Activated naive CD4-positive, alpha-beta T cell treated with anti-CD3 and anti-CD28 coated beads for 36 hours (primary cell): ENCODE measurements at regions of chr12 and their contacts with region 1.

Region 1: GRCh38 chr12:22409377-22410164 is 75.1 kb upstream of the ST8SIA1 start:
- DNase-seq: peak; percentile 51
- H3K4me3 Mint-ChIP-seq: no peak overlapping the region
- H3K27ac Mint-ChIP-seq: no peak overlapping the region
- H3K4me1 Mint-ChIP-seq: peaks cover 15% of the 10 kb centered on the region
- H3K27me3 Mint-ChIP-seq: no peaks in the 10 kb centered on the region

Region 2: DNA sequence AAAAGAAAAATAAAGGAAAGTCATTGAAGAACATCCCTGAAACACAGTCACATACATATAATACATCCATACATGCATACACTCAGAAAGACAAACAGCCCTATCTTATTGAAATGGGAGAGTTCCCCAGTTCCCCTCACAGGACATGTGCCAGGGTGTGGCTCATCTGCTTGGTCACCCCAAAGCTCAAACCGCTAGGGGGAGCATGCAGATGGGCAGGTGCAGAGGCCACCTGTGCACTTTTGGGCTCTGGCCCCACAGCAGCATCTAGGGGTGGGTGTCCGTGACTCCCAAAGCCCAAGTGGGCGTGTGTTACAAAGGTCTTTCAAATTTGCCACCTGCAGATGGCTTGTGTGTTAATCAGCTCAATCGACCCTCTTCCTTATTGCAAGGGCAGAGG is 288.3 kb before region 1 on chr12:
- CTCF ChIA-PET with region 1: no interaction called
- intact Hi-C with region 1: no loop called
- DNase-seq: peak; percentile 51
- H3K4me3 Mint-ChIP-seq: no peak overlapping the region
- H3K27ac Mint-ChIP-seq: no peak overlapping the region
- H3K4me1 Mint-ChIP-seq: peaks cover 4% of the 10 kb centered on the region
- H3K27me3 Mint-ChIP-seq: no peaks in the 10 kb centered on the region

Region 3: GRCh38 chr12:22396253-22396652 is 13.3 kb before region 1 on chr12:
- CTCF ChIA-PET with region 1: interaction called, 3 read pairs
- intact Hi-C with region 1: loop called (anchors 1 kb)
- DNase-seq: peak; percentile 24
- H3K4me3 Mint-ChIP-seq: no peak overlapping the region
- H3K27ac Mint-ChIP-seq: peak overlapping the region; percentile 80
- H3K4me1 Mint-ChIP-seq: peaks cover 39% of the 10 kb centered on the region
- H3K27me3 Mint-ChIP-seq: no peaks in the 10 kb centered on the region